H1 (cell line): ENCODE measurements at regions of chr11 and their contacts with region 1.

Region 1: DNA sequence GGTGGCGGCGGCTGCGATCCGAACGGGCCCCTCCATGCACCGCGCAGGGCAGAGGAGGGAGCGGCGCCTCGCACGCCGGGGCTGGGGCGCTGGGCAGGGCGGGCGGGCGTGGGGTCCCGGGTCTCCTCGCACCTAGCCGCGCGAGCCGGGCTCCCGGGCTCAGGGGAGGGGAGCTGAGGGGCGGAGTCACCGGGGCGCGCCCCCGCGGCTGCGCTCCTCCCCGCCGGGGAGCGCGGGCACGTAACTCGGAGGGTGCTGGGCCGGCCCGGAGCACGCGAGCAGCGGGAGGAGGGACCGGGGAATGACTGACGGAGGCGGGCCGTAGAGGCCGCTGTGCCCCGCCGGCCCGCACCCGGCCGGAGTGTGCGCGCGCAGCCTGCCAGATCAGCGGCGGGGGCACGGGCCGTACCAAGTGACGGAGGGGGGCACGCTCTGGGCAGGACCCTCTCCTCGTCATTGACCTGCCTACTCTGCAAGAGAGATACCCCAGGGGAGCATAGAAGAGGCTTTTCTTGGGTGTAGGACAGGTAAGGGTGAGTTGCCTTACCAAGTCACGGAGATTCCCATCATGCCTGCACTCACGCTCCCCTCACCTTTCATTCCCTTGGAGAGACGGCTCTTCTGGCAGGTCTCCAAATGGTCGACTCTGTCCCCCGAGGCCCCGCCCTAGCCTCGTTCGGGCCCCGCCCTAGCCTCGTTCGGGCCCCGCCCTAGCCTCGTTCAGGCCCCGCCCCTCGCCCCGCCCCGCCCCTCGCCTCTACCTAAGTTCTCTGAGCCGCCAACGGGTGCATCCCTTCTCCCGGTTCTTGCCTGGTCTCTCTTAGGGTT is at the start of gene CDON:
- DNase-seq: peak; percentile 87 to 94
- H3K4me3 ChIP-seq: peak within 1 kb of the TSS; percentile 46 to 85 (median 76)
- H3K27ac ChIP-seq: peak within 1 kb of the TSS; percentile 100
- H3K4me1 ChIP-seq: peaks cover 0 to 9% (median 1%) of the 10 kb centered on the region in 4 experiments; a peak in 4 of 7 replicates
- H3K27me3 ChIP-seq: no peaks in the 10 kb centered on the region; a peak in 1 of 7 replicates
- CTCF ChIP-seq: no peak
- EP300 ChIP-seq: peak in 1 of 2 experiments; percentile 99; a peak in 2 of 3 replicates
- POLR2A ChIP-seq: peak in 1 of 2 experiments; percentile 43; a peak in 2 of 3 replicates
- RAD21 ChIP-seq: peak in 1 of 2 experiments; percentile 23; a peak in 1 of 4 replicates
- total RNA-seq, gene CDON: 32.5 and 32.9 TPM in 2 replicates

Region 2: DNA sequence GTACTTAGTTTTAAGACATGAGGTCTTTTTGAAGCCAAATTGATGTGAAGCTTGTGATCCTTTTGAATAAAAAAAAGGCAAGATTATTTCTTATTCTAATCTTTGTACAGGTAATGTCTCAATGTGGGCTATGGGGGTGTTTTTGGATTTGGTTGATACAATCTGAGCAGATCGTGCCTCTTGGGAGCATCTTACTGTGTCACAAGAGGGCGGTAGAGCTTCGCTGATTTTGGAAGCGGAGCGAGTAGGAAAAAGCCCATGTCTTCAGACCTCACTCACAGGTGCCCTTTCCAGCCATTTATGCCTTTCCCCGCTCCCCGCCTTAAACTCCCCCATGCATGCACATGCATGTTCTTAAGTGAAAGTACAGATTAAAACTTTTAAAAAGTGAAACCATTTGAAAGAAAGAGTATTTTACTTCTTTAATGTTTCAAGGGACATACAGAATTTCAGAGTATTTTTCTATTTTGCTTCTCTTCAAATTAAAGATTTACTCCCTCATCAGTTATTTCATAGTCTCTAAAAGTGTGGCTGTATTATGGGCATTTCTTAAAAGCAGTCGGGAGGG is 139.8 kb before region 1 on chr11:
- CTCF ChIA-PET with region 1: interaction called, 10 read pairs
- POLR2A ChIA-PET with region 1: no interaction called
- DNase-seq: peak in 1 of 2 experiments; percentile 34
- H3K4me3 ChIP-seq: no peak overlapping the region
- H3K27ac ChIP-seq: no peak overlapping the region
- H3K4me1 ChIP-seq: no peaks in the 10 kb centered on the region; a peak in 1 of 7 replicates
- H3K27me3 ChIP-seq: no peaks in the 10 kb centered on the region; a peak in 1 of 7 replicates
- CTCF ChIP-seq: peak; percentile 64 to 88 (median 86)
- EP300 ChIP-seq: no peak
- POLR2A ChIP-seq: no peak
- RAD21 ChIP-seq: peak; percentile 96

Region 3: DNA sequence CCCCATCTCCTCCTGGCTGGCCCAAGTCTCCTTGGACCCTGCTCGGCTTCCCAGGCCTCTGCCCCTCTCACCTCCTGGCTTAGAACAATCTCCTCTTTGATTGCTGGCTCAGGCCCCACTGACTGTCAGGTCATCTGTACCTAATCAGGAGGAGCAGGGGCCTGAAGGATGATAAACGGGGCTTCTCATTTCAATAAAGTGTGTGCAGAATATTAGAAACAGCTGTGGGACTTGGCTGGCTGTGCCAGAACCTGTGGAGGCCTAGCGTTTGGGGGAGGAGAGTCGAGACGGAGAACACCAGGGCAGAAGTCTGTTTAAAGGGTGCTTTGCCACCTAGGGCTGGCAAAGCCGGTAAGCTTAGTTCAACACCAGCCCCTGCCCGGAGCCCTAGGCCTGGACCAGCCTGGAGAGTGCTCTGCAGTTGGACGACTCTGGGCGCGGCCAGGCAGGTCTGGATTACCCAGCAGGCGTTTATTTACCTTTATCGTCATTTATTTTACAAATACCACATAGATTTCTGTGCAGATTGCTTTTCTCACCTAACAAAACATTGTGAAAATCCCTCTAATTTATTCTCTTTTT is 127.2 kb before region 1 on chr11:
- CTCF ChIA-PET with region 1: interaction called, 11 read pairs
- POLR2A ChIA-PET with region 1: no interaction called
- DNase-seq: peak in 1 of 2 experiments; percentile 33
- H3K4me3 ChIP-seq: no peak overlapping the region
- H3K27ac ChIP-seq: no peak overlapping the region
- H3K4me1 ChIP-seq: peaks cover 6 to 14% (median 11%) of the 10 kb centered on the region in 4 experiments
- H3K27me3 ChIP-seq: peaks cover 0 to 6% (median 2%) of the 10 kb centered on the region in 4 experiments; a peak in 2 of 7 replicates
- CTCF ChIP-seq: no peak
- EP300 ChIP-seq: no peak
- POLR2A ChIP-seq: no peak
- RAD21 ChIP-seq: no peak

Region 4: DNA sequence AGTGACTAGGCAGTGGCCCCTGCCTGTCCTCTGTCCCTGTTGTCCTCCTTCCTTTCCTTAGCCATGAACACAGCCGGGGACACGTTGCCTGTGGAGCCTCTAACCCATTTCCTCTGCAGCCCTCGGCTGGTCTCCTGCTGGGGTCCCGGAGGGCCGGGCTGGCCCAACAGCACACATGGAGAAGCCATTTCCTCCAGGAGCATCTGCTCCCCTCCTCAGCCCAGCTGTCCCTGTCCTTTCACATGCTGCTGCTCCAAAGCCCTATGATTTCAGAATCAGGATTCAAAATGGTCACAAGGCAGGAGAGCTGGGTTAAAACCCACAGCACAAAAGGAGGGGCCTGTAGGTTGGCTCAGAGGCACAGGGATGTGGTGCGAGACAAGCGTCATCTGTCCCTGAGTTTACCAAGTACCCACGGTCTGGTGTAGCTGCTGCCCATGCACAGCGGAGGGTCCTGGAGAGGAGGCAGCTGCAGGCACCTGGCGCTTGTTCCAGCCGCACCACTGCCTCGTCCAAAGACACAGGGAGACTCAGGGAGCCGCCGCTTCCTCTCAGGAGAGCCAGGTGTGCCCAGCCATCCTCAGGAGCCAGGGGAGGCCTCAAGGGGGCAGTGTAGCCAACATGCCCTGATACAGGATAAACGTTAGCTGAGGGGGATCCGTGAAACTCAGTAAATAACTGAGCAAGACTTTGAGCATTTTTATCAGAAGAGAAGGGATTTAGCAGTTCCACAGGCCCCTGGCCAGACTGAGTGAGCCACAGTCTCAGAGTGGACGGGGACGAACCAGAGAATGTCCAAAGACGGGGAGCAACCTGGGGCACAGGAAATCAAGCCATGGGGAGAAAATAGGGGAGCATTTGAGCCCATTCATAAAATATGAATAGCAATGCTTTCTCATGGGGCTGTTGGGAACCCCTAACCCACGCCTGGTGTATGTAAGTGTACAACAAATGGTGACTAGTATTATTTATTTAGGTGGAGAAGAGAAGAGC is 121.0 kb before region 1 on chr11:
- CTCF ChIA-PET with region 1: interaction called, 32 read pairs
- POLR2A ChIA-PET with region 1: interaction called, 4 read pairs
- DNase-seq: peak; percentile 64 to 91
- H3K4me3 ChIP-seq: no peak overlapping the region
- H3K27ac ChIP-seq: no peak overlapping the region
- H3K4me1 ChIP-seq: peaks cover 7 to 11% (median 9%) of the 10 kb centered on the region in 4 experiments
- H3K27me3 ChIP-seq: no peaks in the 10 kb centered on the region
- CTCF ChIP-seq: peak; percentile 74 to 92 (median 90)
- EP300 ChIP-seq: peak in 1 of 2 experiments; percentile 63; a peak in 1 of 3 replicates
- POLR2A ChIP-seq: no peak
- RAD21 ChIP-seq: peak; percentile 71 to 78

Region 5: DNA sequence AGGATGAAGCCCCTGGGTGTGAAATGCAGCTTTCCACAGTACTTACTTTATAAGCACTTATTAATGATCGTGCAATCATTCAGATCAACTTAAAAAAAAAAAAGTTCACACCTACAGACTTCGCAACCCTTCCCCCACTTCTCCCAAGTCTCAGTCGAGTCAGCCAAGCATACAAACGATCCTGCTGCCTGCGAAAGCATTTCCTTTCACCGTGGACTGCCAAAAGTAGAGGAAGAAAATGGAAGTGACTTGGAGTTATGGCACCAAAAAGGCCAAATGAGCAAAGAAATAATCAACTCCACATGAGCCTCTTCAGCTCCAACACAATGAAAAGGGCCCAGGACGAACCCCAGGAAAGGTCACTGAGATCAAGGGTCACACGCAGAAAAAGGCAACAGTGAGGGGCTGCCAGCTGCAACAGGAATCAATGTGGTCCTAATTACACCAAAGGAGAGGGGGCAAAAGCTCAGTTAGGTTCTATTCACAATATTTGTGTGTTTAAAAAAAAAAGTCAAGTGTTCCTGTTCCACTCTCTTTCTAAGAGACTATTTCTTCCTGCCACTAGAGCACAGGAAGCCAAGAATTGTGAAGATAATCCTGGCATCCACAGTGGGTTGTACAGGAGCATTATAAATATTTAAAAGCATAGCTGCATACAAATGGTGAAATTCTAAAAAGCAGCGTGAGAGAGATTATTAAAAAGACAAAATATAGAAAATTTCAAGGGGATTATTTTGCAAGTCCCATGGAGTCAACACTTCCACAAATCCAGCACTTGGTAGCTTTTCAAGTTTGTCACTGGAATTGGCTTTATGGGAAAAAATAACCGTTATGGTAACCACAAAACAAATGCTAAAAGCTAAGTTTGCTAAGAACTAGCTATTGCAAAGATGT is 28.6 kb before region 1 on chr11:
- CTCF ChIA-PET with region 1: interaction called, 10 read pairs
- POLR2A ChIA-PET with region 1: no interaction called
- DNase-seq: no peak
- H3K4me3 ChIP-seq: no peak overlapping the region
- H3K27ac ChIP-seq: no peak overlapping the region
- H3K4me1 ChIP-seq: peaks cover 0 to 6% (median 1%) of the 10 kb centered on the region in 4 experiments; a peak in 3 of 7 replicates
- H3K27me3 ChIP-seq: no peaks in the 10 kb centered on the region
- CTCF ChIP-seq: no peak
- EP300 ChIP-seq: no peak
- POLR2A ChIP-seq: no peak
- RAD21 ChIP-seq: no peak

Region 6: DNA sequence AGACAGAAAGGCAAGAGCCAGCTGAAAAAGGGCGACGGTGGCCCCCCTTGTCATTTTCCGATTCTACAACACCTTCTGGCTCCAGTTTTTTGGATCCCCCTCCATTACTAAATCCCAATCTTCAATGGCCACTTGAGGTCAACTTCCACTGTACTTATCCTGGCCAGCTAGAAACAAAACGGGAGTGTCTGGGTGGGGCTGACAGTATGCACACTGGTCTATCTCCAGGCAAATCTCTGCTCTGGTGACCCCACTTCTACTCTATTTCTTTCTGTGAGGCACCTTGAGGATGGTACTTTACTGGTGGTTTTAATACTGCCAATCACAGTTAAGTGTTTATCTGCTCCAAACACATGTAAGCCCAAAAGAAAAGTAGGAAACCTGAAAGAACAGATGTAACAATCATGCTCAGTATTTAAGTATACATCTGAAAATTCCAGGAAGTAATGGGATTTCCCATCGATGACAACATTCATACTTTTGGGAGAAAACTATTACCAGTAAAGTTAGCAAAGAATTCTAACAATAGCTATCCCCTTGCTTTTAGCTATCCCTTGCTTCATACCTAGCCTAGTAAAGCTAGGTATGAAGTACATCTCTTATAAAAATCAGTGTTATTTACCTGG is 16.2 kb before region 1 on chr11:
- CTCF ChIA-PET with region 1: interaction called, 11 read pairs
- POLR2A ChIA-PET with region 1: interaction called, 3 read pairs
- DNase-seq: no peak
- H3K4me3 ChIP-seq: no peak overlapping the region
- H3K27ac ChIP-seq: no peak overlapping the region
- H3K4me1 ChIP-seq: peaks cover 0 to 3% (median 0%) of the 10 kb centered on the region in 4 experiments; a peak in 1 of 7 replicates
- H3K27me3 ChIP-seq: no peaks in the 10 kb centered on the region
- CTCF ChIP-seq: no peak
- EP300 ChIP-seq: no peak
- POLR2A ChIP-seq: no peak
- RAD21 ChIP-seq: no peak

Region 7: GRCh38 chr11:126194121-126194543 is 131.2 kb after region 1 on chr11:
- CTCF ChIA-PET with region 1: interaction called, 10 read pairs
- POLR2A ChIA-PET with region 1: interaction called, 3 read pairs
- DNase-seq: peak in 1 of 2 experiments; percentile 62
- H3K4me3 ChIP-seq: no peak overlapping the region
- H3K27ac ChIP-seq: no peak overlapping the region
- H3K4me1 ChIP-seq: no peaks in the 10 kb centered on the region; a peak in 1 of 7 replicates
- H3K27me3 ChIP-seq: no peaks in the 10 kb centered on the region
- CTCF ChIP-seq: peak in 2 of 3 experiments; percentile 62 to 69; a peak in 3 of 4 replicates
- EP300 ChIP-seq: no peak
- POLR2A ChIP-seq: no peak
- RAD21 ChIP-seq: peak; percentile 93 to 95